ENCODE measurements at regions of chr13 and their contacts with region 1.

Region 1: GRCh38 chr13:95547531-95548167 is 4.9 kb upstream of the CLDN10 start:
- DNase-seq: no peak
- ATAC-seq: no peak
- H3K4me3 ChIP-seq: no peak overlapping the region
- H3K27ac ChIP-seq: no peak overlapping the region
- H3K4me1 ChIP-seq: no peaks in the 10 kb centered on the region
- H3K27me3 ChIP-seq: peaks cover 2 to 3% of the 10 kb centered on the region in 2 experiments; a peak in 3 of 4 replicates
- CTCF ChIP-seq: no peak
- EP300 ChIP-seq: no peak
- POLR2A ChIP-seq: no peak
- RAD21 ChIP-seq: no peak

Region 2: GRCh38 chr13:95530178-95530577 is 17.5 kb before region 1 on chr13:
- CTCF ChIA-PET with region 1: no interaction called
- POLR2A ChIA-PET with region 1: no interaction called
- RAD21 ChIA-PET with region 1: no interaction called
- SMC1A ChIA-PET with region 1: no interaction called
- in situ Hi-C with region 1: no loop called
- intact Hi-C with region 1: no loop called
- DNase-seq: no peak
- ATAC-seq: no peak
- H3K4me3 ChIP-seq: no peak overlapping the region
- H3K27ac ChIP-seq: no peak overlapping the region
- H3K4me1 ChIP-seq: no peaks in the 10 kb centered on the region
- H3K27me3 ChIP-seq: 0 out of 4 replicates have a peak, but pooled peaks cover 0 to 5% of the 10 kb centered on the region in 2 experiments
- CTCF ChIP-seq: no peak
- EP300 ChIP-seq: no peak
- POLR2A ChIP-seq: no peak
- RAD21 ChIP-seq: no peak

Region 3: GRCh38 chr13:95937714-95938320 is 390.2 kb after region 1 on chr13:
- CTCF ChIA-PET with region 1: no interaction called
- POLR2A ChIA-PET with region 1: interaction called, 10 read pairs
- RAD21 ChIA-PET with region 1: no interaction called
- SMC1A ChIA-PET with region 1: no interaction called
- in situ Hi-C with region 1: no loop called
- intact Hi-C with region 1: no loop called
- DNase-seq: no peak
- ATAC-seq: no peak
- H3K4me3 ChIP-seq: no peak overlapping the region
- H3K27ac ChIP-seq: no peak overlapping the region
- H3K4me1 ChIP-seq: no peaks in the 10 kb centered on the region
- H3K27me3 ChIP-seq: no peaks in the 10 kb centered on the region
- CTCF ChIP-seq: no peak
- EP300 ChIP-seq: no peak
- POLR2A ChIP-seq: no peak
- RAD21 ChIP-seq: no peak

Measured in GM12878 (cell line).